CD14-positive monocyte (primary cell): ENCODE measurements at regions of chr16 and their contacts with region 1.

Region 1: DNA sequence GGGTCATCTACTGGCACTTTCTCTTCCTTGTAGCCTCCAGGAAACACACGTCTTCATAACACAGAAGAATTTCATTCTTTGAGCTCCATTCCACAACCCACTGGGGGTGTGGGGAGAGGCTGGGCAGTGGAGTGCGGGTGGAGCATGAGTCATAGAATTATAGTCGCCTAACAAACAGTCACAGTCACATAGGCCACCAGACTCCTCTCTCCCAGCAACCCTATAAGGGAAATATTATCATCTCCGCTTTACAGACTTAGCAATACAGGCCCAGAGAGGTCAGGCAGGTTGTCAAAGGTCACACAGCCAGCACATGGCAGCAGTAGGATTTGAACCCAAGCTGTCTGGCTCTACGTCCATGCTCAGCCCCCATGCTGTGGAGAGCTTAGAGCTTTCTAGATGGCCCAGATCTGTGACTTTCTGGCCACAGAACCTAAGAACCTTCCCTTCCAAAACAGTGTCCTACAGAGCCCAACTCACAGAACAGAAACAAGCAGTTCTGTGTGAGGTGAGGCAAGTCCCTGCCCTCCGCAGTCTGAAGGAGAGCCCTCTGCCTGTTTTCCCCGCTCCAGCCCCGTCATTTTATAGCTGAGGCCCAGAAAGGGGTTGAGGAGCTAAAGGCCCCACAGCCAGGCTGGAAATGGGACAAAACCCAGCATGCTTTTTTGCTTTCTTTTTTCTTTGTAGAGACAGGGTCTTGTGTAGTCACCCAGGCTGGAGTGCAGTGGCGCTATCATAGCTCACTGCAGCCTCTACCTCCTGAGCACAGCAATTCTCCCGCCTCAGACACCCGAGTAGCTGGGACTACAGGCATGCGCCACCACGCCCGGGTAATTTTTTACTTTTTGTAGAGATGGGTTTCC is 10.8 kb upstream of the LITAF start:
- DNase-seq: peak; percentile 92 to 96 (median 94)
- H3K4me3 ChIP-seq: peak overlapping the region in 1 of 3 experiments; percentile 2
- H3K4me3 Mint-ChIP-seq: peak overlapping the region; percentile 53 to 66
- H3K27ac ChIP-seq: peak overlapping the region; percentile 89 to 93
- H3K27ac Mint-ChIP-seq: peak overlapping the region; percentile 97 to 100 (median 99)
- H3K4me1 ChIP-seq: peaks cover 42 to 47% of the 10 kb centered on the region in 2 donors
- H3K4me1 Mint-ChIP-seq: peaks cover 41% of the 10 kb centered on the region
- H3K27me3 ChIP-seq: no peaks in the 10 kb centered on the region
- H3K27me3 Mint-ChIP-seq: peaks cover 0 to 11% (median 6%) of the 10 kb centered on the region in 3 donors
- CTCF ChIP-seq: no peak

Region 2: DNA sequence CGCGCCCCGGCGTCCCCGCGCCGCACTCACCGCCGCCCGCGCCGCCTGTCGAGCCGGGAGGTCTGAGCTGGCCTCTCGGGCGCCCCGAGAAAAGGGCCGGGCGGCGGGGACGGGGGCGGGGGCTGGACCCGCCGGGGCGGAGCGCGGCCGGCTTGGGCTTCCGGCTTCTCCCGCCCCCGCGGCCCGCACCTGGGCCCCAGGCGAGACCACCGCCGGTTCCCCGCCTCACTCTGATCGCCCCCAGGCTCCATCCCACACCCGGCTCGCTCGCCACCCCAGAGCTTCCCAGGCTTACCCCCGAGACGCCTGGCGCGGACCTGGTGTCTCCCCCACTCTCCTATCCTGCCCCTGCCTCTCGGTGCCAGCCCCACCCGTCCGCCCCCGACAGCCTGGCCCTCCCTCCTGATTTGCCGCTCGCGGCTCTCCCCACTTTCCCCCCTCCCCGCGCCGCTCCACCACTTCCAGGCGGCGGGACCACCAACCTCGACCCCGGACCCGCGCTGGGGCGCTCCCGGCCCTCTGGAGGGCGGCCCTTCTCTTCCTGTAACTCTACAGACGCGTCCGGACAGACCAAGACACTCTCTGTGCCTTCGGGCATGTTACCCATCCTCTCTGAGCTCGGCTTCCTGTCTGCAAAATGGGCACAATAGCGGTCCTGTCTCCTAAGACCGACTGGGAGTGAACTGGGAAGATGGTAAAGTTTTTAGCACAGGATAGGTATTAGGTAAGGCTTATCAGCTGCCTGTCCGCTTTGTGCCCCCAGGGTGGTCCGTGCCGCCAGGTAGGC is 10.4 kb before region 1 on chr16 and contains the start of gene LITAF:
- intact Hi-C with region 1: loop called in 1 of 2 experiments (anchors 1 kb)
- DNase-seq: peak in 2 of 3 donors; percentile 47 to 54
- H3K4me3 ChIP-seq: peak within 1 kb of the TSS; percentile 59 to 86 (median 66)
- H3K4me3 Mint-ChIP-seq: peak within 1 kb of the TSS; percentile 96 to 99
- H3K27ac ChIP-seq: peak within 1 kb of the TSS; percentile 83 to 93
- H3K27ac Mint-ChIP-seq: peak within 1 kb of the TSS; percentile 95 to 100 (median 98)
- H3K4me1 ChIP-seq: peaks cover 47 to 48% of the 10 kb centered on the region in 2 donors
- H3K4me1 Mint-ChIP-seq: peaks cover 45% of the 10 kb centered on the region
- H3K27me3 ChIP-seq: no peaks in the 10 kb centered on the region
- H3K27me3 Mint-ChIP-seq: peaks cover 1 to 43% (median 22%) of the 10 kb centered on the region in 3 donors
- CTCF ChIP-seq: no peak
- polyA plus RNA-seq, gene LITAF: 67.9 to 118 (median 69.0) TPM

Region 3: DNA sequence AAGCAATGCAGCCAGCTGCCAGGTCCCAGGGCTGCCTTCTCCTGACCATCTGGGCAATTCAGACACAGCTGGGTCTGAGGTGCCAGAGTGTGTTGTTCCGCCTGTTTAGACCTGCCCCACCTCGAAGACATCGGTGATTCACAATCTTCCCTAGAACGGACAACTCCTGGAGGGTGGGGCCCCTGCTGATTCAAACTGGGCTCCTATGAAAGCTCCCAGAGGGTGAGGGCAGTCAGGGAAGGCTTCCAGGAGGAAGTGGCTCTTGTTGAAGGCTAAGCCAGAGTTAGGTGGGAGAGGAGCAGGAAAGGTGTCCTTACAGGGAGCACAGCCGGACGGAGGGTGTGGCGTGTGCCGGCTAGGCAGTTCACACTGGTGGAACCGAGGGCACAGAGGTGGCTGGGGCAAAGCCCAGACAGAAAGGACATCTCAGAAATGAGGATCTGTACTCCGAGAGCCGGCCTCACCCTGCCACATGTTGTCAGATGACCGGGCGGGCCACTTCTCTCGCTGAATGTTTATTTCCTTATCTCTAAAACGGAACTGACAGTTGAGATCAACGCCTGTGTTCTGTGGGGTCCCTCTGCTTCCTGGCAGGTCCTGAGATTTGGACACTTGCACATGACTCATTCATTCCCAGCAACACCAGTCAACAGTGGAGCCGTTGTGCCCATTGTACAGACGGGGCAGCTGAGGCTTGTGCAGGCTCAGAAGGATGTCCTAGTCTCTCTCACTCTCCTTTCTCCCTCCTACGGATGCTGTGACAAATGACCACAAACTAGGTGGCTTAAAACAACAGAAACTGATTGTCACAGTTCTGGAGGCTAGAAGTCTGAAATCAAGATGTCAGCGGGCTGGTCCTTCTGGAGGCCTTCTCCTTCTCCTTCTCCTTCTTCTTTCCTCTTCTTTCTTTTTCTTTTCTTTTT is 16.2 kb after region 1 on chr16:
- intact Hi-C with region 1: loop called in 1 of 2 experiments (anchors 2 kb)
- DNase-seq: peak; percentile 85 to 95 (median 93)
- H3K4me3 ChIP-seq: peak overlapping the region in 1 of 3 experiments; percentile 52
- H3K4me3 Mint-ChIP-seq: peak overlapping the region; percentile 70 to 77
- H3K27ac ChIP-seq: peak overlapping the region; percentile 97 to 98
- H3K27ac Mint-ChIP-seq: peak overlapping the region; percentile 92 to 100 (median 99)
- H3K4me1 ChIP-seq: peaks cover 67 to 68% of the 10 kb centered on the region in 2 donors
- H3K4me1 Mint-ChIP-seq: peaks cover 75% of the 10 kb centered on the region
- H3K27me3 ChIP-seq: no peaks in the 10 kb centered on the region
- H3K27me3 Mint-ChIP-seq: peaks cover 1 to 24% (median 3%) of the 10 kb centered on the region in 3 donors
- CTCF ChIP-seq: no peak

Region 4: DNA sequence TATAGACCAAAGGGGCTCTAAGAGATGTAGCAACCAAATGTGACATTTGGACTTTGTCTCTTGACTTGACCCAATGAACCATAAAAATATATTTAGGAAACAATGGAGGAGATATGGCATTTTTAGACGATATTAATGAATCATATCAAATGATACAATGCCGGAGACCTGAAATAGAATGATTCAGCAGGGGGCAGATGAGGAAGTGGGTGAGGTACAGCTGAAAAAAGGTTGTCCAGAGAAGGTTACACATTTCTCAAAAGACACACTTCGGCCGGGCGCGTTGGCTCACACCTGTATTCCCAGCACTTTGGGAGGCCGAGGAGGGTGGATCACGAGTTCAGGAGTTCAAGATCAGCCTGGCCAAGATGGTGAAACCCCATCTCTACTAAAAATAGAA is 54.3 kb after region 1 on chr16:
- intact Hi-C with region 1: no loop called
- DNase-seq: peak in 1 of 3 donors; percentile 32
- H3K4me3 ChIP-seq: no peak overlapping the region
- H3K4me3 Mint-ChIP-seq: no peak overlapping the region
- H3K27ac ChIP-seq: no peak overlapping the region
- H3K27ac Mint-ChIP-seq: peak overlapping the region in 2 of 7 donors; percentile 7 to 14
- H3K4me1 ChIP-seq: no peaks in the 10 kb centered on the region
- H3K4me1 Mint-ChIP-seq: peaks cover 11% of the 10 kb centered on the region
- H3K27me3 ChIP-seq: no peaks in the 10 kb centered on the region
- H3K27me3 Mint-ChIP-seq: peaks cover 5 to 17% (median 10%) of the 10 kb centered on the region in 3 donors
- CTCF ChIP-seq: no peak